Left ventricle myocardium superior (tissue), 1 donor: ENCODE measurements at regions of chr2 and their contacts with region 1.

Region 1: DNA sequence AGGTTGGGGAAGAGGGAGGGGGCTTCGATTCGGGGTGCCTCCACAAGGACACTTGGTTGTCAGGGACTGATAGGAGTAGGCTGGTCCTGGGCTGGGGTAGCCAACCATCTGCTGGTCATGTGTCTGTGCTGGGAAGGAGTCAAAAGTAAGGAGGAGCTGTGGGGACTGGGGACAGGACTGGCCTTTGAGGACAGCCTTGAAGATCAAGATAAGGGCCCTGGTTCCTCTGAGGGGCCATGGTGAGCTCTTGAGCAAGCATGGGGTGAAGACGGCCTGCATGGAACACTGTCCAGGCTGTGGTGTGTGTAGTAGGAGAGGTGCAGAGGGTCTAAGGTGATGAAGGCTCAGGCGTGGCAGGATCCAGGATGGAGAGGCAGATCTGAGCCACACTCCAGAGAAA is 1.7 kb downstream of the CYP27A1 start:
- DNase-seq: no peak
- ATAC-seq: no peak

Region 2: GRCh38 chr2:218003981-218004419 is 779.7 kb before region 1 on chr2:
- intact Hi-C with region 1: no loop called
- DNase-seq: peak; percentile 88
- ATAC-seq: peak; percentile 89

Region 3: DNA sequence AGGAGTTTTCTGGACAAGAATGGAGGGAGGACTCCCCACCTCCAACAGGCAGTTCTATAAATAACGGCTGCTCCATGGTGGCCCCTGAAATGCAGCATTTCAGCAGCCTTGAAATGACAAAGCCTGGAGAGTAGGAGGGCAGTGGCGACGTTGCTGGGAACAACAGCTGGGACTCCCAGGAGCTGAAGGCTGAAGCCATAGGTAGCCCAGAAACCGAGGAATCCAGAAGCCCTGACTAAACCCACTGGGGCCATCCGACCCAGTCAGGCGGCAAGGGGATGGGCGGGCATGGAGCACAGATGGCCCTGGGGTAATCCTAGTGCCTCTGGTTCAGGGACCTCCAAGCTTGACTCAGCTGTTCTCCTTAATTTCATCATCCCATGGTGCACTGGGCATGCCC is 38.9 kb after region 1 on chr2:
- intact Hi-C with region 1: loop called (anchors 2 kb)
- DNase-seq: no peak
- ATAC-seq: no peak